Activated naive CD4-positive, alpha-beta T cell treated with anti-CD3 and anti-CD28 coated beads, Interleukin-2, amount 10 ng/mL, durations not matched to agents 7 days and 5 days (primary cell): ENCODE measurements at regions of chr10 and their contacts with region 1.

Region 1: GRCh38 chr10:119517235-119518141 is 25.0 kb downstream of the RGS10 start:
- DNase-seq: peak; percentile 64
- H3K4me3 Mint-ChIP-seq: peak overlapping the region; percentile 61
- H3K27ac Mint-ChIP-seq: peak overlapping the region; percentile 93
- H3K4me1 Mint-ChIP-seq: peaks cover 76% of the 10 kb centered on the region
- H3K27me3 Mint-ChIP-seq: no peaks in the 10 kb centered on the region

Region 2: DNA sequence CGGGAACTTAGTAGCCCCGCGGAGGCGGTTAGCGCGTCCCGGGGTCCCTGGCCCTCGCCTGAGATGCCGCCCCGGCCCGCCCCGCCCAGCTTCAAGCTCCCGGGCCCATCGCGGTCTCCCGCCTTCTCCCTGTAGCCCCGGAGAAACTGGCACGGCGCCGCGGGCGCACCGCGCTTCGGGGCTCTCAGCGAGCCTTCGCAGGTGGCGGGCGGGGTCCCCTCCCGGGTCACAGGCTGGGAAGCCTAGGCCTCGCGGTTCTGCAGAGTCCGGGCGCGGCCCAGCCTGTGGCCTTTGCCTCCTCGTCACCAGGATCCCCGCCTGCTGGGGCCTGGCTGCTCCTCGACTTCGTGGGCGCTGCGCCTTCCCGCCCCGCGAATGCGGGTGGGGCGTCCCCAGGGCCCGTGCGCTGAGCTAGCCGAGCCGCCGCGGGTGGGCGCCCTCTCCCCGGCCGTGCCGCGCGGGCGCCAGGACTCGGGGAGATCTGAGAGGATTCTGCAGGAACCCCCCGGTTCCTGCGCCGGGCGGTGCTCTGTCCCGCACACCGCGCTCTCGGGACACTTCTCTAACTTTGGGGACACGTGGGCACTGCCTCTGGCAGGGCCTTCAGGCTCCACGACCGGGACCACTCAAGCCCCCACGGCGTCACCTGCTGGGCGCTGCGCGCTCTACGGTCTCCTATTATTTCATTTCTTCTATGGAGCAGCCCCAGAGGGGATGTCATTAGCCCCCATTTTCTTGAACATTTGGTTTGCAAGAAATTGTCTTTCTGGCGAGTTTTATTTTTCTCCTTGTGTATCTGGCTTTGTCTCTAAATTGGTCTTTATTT is 25.7 kb after region 1 on chr10:
- CTCF ChIA-PET with region 1: interaction called, 10 read pairs
- DNase-seq: peak; percentile 77
- H3K4me3 Mint-ChIP-seq: peak overlapping the region; percentile 91
- H3K27ac Mint-ChIP-seq: peak overlapping the region; percentile 94
- H3K4me1 Mint-ChIP-seq: peaks cover 42% of the 10 kb centered on the region
- H3K27me3 Mint-ChIP-seq: peaks cover 26% of the 10 kb centered on the region

Region 3: DNA sequence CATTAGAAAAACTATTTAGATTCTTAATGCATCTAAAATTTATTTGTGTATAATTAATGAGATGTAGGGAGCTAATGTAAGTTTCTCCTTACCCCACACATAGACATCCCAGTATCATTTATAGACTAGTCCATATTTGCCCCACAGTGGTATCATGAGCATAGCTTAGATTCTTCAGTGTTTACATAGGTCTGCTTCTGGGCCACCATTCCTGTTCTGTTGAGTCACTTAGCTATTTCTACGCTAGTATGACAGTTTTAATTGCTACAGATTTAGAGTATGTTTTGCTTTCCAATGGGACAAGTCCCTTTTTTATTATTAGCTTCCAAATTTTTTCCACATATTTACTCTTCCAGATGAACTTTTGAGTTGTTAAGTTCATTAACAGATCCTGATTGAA is 285.8 kb after region 1 on chr10:
- CTCF ChIA-PET with region 1: no interaction called
- DNase-seq: no peak
- H3K4me3 Mint-ChIP-seq: no peak overlapping the region
- H3K27ac Mint-ChIP-seq: no peak overlapping the region
- H3K4me1 Mint-ChIP-seq: peaks cover 3% of the 10 kb centered on the region
- H3K27me3 Mint-ChIP-seq: no peaks in the 10 kb centered on the region